Activated CD4-positive, alpha-beta T cell treated with anti-CD3 and anti-CD28 coated beads for 36 hours (primary cell): ENCODE measurements at regions of chr5 and their contacts with region 1.

Region 1: DNA sequence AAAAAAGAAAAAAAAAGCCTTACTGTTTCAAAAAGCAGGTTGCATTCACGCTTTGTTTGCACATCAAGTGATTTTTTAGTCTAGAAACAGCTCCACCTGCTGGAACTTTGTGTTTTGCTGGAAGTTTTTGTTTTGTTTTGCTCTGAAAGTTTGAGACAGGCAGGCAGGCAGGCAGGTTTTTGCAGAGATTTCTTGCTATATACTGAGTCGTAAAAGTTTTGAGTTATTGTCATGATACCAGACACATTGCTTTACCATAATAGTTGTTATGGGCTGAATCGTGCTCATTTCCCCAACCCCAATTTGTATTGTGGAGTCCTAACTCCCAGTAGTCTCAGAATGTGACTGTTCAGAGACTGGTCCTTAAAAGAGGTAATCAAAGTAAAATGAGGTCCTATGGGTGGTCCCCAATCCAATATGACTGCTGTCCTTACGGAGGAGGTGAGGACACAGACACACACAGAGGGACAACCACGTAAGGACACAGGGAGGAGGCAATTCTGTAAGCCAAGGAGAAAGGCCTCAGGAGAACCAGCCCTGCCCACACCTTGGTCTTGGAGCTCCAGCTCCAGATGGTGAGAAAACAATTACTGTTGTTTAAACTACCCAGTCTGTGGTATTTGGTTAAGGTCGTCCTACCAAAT is 20.9 kb downstream of the OR2Y1 start:
- DNase-seq: peak; percentile 57
- ATAC-seq: no peak
- H3K4me3 Mint-ChIP-seq: no peak overlapping the region
- H3K27ac Mint-ChIP-seq: no peak overlapping the region
- H3K4me1 Mint-ChIP-seq: peaks cover 19% of the 10 kb centered on the region
- H3K27me3 Mint-ChIP-seq: peaks cover 2% of the 10 kb centered on the region

Region 2: GRCh38 chr5:179422213-179422855 is 1296.6 kb before region 1 on chr5:
- CTCF ChIA-PET with region 1: no interaction called
- POLR2A ChIA-PET with region 1: no interaction called
- intact Hi-C with region 1: no loop called
- DNase-seq: no peak
- ATAC-seq: no peak
- H3K4me3 Mint-ChIP-seq: no peak overlapping the region
- H3K27ac Mint-ChIP-seq: no peak overlapping the region
- H3K4me1 Mint-ChIP-seq: no peaks in the 10 kb centered on the region
- H3K27me3 Mint-ChIP-seq: peaks cover 5% of the 10 kb centered on the region

Region 3: GRCh38 chr5:180605554-180606214 is 113.2 kb before region 1 on chr5:
- CTCF ChIA-PET with region 1: interaction called, 5 read pairs
- POLR2A ChIA-PET with region 1: no interaction called
- intact Hi-C with region 1: loop called in 1 of 2 experiments (anchors 5 kb)
- DNase-seq: peak; percentile 85
- ATAC-seq: peak; percentile 74
- H3K4me3 Mint-ChIP-seq: no peak overlapping the region
- H3K27ac Mint-ChIP-seq: no peak overlapping the region
- H3K4me1 Mint-ChIP-seq: no peaks in the 10 kb centered on the region
- H3K27me3 Mint-ChIP-seq: no peaks in the 10 kb centered on the region

Region 4: GRCh38 chr5:180670586-180671359 is 48.2 kb before region 1 on chr5:
- CTCF ChIA-PET with region 1: interaction called, 4 read pairs
- POLR2A ChIA-PET with region 1: no interaction called
- intact Hi-C with region 1: loop called in 1 of 2 experiments (anchors 1 kb)
- DNase-seq: peak; percentile 78
- ATAC-seq: peak; percentile 85
- H3K4me3 Mint-ChIP-seq: no peak overlapping the region
- H3K27ac Mint-ChIP-seq: no peak overlapping the region
- H3K4me1 Mint-ChIP-seq: peaks cover 12% of the 10 kb centered on the region
- H3K27me3 Mint-ChIP-seq: peaks cover 5% of the 10 kb centered on the region

Region 5: GRCh38 chr5:180689071-180689694 is 29.7 kb before region 1 on chr5:
- CTCF ChIA-PET with region 1: interaction called, 5 read pairs
- POLR2A ChIA-PET with region 1: interaction called, 3 read pairs
- intact Hi-C with region 1: loop called (anchors 1 to 2 kb)
- DNase-seq: peak; percentile 65
- ATAC-seq: peak; percentile 66
- H3K4me3 Mint-ChIP-seq: peak overlapping the region; percentile 61
- H3K27ac Mint-ChIP-seq: peak overlapping the region; percentile 88
- H3K4me1 Mint-ChIP-seq: peaks cover 63% of the 10 kb centered on the region
- H3K27me3 Mint-ChIP-seq: no peaks in the 10 kb centered on the region

Region 6: DNA sequence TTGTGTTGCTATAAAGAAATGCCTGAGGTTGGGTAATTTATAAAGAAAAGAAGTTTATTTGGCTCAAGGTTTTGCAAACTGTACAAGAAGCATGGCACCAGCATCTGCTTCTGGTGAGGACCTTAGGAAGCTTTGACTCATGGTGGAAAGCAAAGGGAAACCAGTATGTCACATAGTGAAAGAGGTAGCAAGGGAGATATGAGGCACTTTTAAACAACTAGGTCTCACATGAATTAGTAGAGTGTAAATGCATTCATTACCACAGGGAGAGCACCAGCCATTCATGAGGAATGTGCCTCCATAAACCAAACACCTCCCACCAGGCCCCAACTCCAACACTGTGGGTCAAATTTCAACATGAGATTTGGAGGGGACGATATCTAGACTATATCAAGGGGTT is 19.9 kb before region 1 on chr5:
- CTCF ChIA-PET with region 1: interaction called, 5 read pairs
- POLR2A ChIA-PET with region 1: no interaction called
- intact Hi-C with region 1: loop called in 1 of 2 experiments (anchors 2 kb)
- DNase-seq: no peak
- ATAC-seq: peak; percentile 88
- H3K4me3 Mint-ChIP-seq: no peak overlapping the region
- H3K27ac Mint-ChIP-seq: no peak overlapping the region
- H3K4me1 Mint-ChIP-seq: peaks cover 8% of the 10 kb centered on the region
- H3K27me3 Mint-ChIP-seq: peaks cover 6% of the 10 kb centered on the region

Region 7: DNA sequence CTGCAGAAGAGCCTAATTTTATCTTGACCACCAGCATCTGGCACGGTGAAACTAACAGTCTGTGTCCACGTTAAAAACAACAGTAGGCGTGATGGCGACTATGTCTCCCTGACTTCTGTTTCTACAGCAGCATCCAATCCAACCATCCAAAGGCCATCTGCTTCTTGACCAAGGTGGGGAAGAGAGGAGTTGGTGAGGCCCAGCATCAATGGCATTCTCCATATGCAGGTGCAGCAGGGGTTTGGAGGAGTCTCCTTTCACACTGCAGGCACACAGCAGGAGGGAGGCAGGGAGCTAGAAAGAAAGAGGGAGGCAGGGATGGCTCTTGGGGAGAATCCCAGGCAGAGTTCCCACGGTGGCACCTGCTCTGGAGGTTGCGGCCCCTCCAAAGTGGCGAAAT is 56.7 kb after region 1 on chr5:
- CTCF ChIA-PET with region 1: no interaction called
- POLR2A ChIA-PET with region 1: no interaction called
- intact Hi-C with region 1: no loop called
- DNase-seq: no peak
- ATAC-seq: no peak
- H3K4me3 Mint-ChIP-seq: no peak overlapping the region
- H3K27ac Mint-ChIP-seq: no peak overlapping the region
- H3K4me1 Mint-ChIP-seq: no peaks in the 10 kb centered on the region
- H3K27me3 Mint-ChIP-seq: peaks cover 11% of the 10 kb centered on the region